ENCODE measurements at regions of chr1 and their contacts with region 1.

Region 1: DNA sequence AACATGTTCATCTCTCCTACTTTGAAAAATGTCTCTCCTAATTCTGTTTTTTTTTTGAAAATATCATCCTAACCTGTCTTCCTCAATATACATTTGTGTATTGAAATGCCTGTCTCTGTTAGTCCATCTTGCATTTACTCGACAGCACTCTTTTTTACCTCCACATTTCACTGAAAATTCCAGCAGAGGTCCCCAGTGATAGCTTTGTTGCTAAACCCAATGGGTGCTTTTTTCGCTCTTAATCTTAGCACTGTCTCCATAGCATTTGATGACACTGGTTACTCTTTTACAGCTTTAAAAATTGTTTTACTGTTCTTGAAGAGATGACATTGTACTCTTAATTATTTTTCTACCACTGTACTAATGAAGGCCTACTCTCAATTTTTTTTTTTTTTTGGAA is 10.8 kb downstream of the OSBPL9 start:
- DNase-seq: no peak
- H3K4me3 ChIP-seq: no peak overlapping the region
- CTCF ChIP-seq: peak; percentile 39

Region 2: DNA sequence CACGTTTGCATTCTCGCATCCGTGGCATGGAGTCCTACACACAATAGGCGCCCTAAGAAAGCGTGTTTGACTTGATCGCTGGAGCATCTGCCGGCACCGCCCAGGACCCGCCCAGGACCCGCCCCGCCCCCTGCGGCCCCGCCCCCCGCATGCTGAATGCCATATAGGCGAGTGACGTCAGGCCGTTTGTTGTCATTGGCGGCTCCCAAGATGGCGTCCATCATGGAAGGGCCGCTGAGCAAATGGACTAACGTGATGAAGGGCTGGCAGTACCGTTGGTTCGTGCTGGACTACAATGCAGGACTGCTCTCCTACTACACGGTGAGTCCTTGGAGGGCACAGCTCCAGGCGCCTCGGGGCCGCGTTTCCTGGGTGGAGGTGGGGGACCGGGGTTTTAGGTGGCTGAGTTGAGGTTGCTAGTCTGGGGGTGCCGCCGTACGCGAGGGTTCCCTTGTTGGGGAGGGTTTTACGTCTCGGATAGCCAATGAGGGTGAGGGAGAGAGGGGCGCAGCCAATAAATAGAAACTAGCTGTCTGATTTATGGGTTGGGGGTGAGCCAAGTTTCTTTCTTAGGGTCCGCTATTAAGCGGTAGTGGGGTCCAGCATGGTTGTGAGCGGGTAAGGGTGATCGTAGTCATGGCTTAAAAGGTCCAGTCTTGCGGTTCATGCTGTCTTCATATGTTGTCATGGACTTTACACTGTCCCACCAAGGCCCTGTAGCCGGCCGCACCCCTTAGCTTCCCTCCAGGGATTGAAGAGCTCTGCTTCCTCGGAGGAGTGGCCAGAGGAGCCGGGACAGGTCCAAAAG is 10.6 kb before region 1 on chr1 and contains the start of gene OSBPL9:
- CTCF ChIA-PET with region 1: interaction called, 14 read pairs
- POLR2A ChIA-PET with region 1: no interaction called
- DNase-seq: no peak
- H3K4me3 ChIP-seq: peak within 1 kb of the TSS; percentile 98
- CTCF ChIP-seq: no peak

Region 3: GRCh38 chr1:51686450-51686849 is 58.8 kb after region 1 on chr1:
- CTCF ChIA-PET with region 1: no interaction called
- POLR2A ChIA-PET with region 1: no interaction called
- DNase-seq: no peak
- H3K4me3 ChIP-seq: no peak overlapping the region
- CTCF ChIP-seq: no peak

Measured in AG04449 (cell line).